GM12878 (cell line): ENCODE measurements at regions of chr2 and their contacts with region 1.

Region 1: DNA sequence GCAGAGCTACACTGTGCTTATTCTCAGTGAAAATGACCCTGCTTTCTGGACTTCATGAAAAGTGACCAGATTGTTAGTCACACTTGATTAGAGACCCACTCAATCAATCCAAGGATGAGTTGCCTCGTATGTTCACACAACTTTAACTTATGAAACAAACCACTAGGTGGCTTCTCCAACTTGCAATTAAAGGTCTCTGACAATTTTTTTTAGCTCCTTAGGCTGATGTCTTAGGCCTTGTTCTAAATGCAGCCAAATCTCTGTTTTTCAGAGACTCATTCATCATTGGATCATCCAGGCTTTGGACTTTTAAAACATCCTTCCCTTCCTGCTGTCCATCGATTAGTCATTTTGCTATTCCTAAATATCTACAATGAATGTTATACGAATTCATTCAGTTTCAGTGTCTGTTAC is 63.4 kb downstream of the MREG start:
- DNase-seq: peak; percentile 30
- ATAC-seq: peak; percentile 97
- H3K4me3 ChIP-seq: no peak overlapping the region
- H3K27ac ChIP-seq: no peak overlapping the region
- H3K4me1 ChIP-seq: no peaks in the 10 kb centered on the region
- H3K27me3 ChIP-seq: no peaks in the 10 kb centered on the region
- CTCF ChIP-seq: peak; percentile 46 to 63 (median 62)
- EP300 ChIP-seq: no peak
- POLR2A ChIP-seq: no peak
- RAD21 ChIP-seq: peak; percentile 89

Region 2: DNA sequence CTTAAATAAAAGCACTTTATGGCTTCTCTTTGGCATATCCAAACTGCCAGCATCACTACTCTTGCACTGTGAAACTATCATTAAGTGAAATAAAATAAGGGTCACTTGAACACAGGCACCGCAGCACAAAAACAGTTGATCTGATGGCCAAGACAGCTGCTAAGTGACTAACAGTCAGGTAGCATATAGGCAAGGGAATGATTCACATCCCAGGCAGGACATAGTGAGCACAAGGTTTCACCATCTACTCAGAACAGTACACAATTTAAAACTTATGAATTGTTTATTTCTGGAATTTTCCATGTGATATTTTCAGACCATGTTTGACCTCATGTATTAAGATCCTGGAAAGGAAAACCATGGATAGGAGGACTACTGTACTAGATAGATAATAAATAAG is 150.8 kb before region 1 on chr2:
- CTCF ChIA-PET with region 1: no interaction called
- POLR2A ChIA-PET with region 1: no interaction called
- RAD21 ChIA-PET with region 1: no interaction called
- SMC1A ChIA-PET with region 1: no interaction called
- in situ Hi-C with region 1: no loop called
- intact Hi-C with region 1: no loop called
- DNase-seq: no peak
- ATAC-seq: no peak
- H3K4me3 ChIP-seq: no peak overlapping the region
- H3K27ac ChIP-seq: no peak overlapping the region
- H3K4me1 ChIP-seq: no peaks in the 10 kb centered on the region
- H3K27me3 ChIP-seq: no peaks in the 10 kb centered on the region
- CTCF ChIP-seq: no peak
- EP300 ChIP-seq: no peak
- POLR2A ChIP-seq: no peak
- RAD21 ChIP-seq: no peak

Region 3: DNA sequence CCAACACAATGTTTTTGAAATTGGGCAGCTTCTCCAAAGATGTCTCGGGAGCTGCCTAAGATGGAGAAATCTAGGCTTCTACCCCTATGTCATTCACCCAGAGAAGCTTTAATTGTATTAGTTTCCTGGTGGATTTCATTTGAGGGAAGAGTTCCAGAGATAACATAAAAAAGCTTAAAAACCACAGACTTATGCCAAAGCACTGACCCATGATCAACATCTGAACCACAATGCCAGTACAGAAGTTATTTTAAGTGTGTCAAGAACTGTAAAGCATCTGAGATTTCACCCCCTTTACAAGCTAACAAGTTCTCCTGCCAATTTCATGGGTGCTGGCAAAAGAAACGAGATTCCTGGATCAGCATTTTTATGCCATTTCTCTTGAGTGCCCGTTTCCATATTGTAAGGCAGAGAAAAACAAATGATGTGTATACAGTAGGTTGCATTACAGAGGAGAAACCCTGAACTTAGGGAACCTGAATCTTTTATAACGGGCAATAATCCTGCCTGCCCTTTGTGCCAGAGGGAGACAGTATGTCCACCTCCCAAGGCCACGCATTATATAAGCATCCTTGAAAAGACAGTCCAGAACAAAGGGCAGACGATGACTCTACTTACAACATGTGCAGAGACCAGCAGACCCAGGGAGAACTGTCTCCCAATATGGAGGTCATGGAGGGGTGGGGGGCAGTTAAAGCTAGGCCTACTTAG is 19.3 kb after region 1 on chr2:
- CTCF ChIA-PET with region 1: interaction called, 37 read pairs
- POLR2A ChIA-PET with region 1: interaction called, 3 read pairs
- RAD21 ChIA-PET with region 1: interaction called, 4 read pairs
- SMC1A ChIA-PET with region 1: interaction called, 11 read pairs
- in situ Hi-C with region 1: no loop called
- intact Hi-C with region 1: no loop called
- DNase-seq: no peak
- ATAC-seq: peak; percentile 27; the same call in 1 of the 3 replicates
- H3K4me3 ChIP-seq: no peak overlapping the region
- H3K27ac ChIP-seq: peak overlapping the region; percentile 20; the same call in 1 of the 2 replicates
- H3K4me1 ChIP-seq: peaks cover 5% of the 10 kb centered on the region; the same call in 1 of the 2 replicates
- H3K27me3 ChIP-seq: no peaks in the 10 kb centered on the region
- CTCF ChIP-seq: no peak
- EP300 ChIP-seq: no peak
- POLR2A ChIP-seq: no peak
- RAD21 ChIP-seq: no peak

Region 4: DNA sequence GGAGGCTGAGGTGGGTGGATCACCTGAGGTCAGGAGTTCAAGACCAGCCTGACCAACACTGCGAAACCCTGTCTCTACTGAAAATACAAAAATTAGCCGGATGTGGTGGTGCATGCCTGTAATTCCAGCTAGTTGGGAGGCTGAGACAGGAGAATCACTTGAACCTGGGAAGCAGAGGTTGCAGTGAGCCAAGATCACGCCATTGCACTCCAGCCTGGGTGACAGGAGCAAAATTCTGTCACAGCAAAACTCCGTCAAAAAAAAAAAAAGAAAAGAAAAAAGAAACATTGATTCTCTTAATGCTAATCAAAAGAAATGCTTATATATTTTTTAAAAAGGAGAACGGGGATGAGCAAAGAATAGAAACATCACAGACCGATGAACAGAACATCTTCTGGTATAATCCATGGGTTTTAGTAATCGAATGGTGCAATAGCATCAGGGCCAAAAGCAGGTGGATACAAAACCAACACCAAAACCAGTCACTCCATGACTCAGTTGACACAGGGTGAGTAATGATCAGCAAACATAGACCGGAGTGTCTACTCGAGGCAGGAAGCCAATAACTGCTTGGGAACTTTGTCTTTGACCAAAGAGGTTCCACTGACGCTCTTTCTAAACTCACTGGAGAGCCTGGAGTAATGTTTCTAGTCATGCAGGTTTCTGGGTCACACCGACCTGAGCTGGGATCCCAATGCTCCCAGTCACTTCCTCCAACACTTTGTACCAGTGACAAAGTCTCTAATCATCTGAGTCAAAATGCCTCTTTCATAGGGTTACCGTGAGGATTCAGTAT is 32.3 kb after region 1 on chr2:
- CTCF ChIA-PET with region 1: interaction called, 15 read pairs
- POLR2A ChIA-PET with region 1: no interaction called
- RAD21 ChIA-PET with region 1: interaction called, 3 read pairs
- SMC1A ChIA-PET with region 1: interaction called, 7 read pairs
- in situ Hi-C with region 1: no loop called
- intact Hi-C with region 1: no loop called
- DNase-seq: peak; percentile 57
- ATAC-seq: no peak
- H3K4me3 ChIP-seq: no peak overlapping the region
- H3K27ac ChIP-seq: peak overlapping the region; percentile 37
- H3K4me1 ChIP-seq: peaks cover 15% of the 10 kb centered on the region
- H3K27me3 ChIP-seq: no peaks in the 10 kb centered on the region
- CTCF ChIP-seq: no peak
- EP300 ChIP-seq: no peak
- POLR2A ChIP-seq: no peak
- RAD21 ChIP-seq: no peak

Region 5: DNA sequence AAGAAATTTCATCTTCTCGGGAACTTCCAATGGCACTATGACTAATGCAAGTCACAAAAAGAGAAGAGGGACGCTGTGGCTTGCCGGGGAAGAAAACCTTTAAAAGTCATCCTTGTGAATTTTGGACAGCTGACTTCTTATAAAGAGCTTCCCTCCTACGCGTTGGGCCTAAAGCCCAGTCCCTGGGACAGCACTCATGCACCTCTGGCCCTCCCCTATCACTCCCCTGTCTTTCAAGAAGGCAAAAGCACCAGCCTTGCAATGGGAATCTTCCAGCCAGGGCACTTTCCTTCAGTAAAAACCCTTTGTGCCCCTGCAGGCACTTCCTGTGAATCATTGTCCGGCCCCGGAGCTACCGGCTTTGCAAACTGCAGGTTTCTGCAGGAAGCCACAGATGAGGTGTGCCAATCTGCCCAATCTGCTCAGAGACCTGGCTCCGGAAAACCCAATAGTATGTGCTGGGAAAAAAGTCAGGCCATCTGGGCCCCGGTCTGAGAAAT is 56.2 kb after region 1 on chr2:
- CTCF ChIA-PET with region 1: interaction called, 138 read pairs
- POLR2A ChIA-PET with region 1: interaction called, 7 read pairs
- RAD21 ChIA-PET with region 1: interaction called, 26 read pairs
- SMC1A ChIA-PET with region 1: interaction called, 80 read pairs
- in situ Hi-C with region 1: no loop called
- intact Hi-C with region 1: loop called (anchors 2 kb)
- DNase-seq: peak; percentile 73
- ATAC-seq: peak; percentile 40
- H3K4me3 ChIP-seq: peak overlapping the region; percentile 61
- H3K27ac ChIP-seq: peak overlapping the region; percentile 90
- H3K4me1 ChIP-seq: peaks cover 55% of the 10 kb centered on the region
- H3K27me3 ChIP-seq: no peaks in the 10 kb centered on the region
- CTCF ChIP-seq: no peak
- EP300 ChIP-seq: peak in 1 of 2 experiments; percentile 60; a peak in 2 of 4 replicates
- POLR2A ChIP-seq: peak; percentile 41; the same call in 1 of the 2 replicates
- RAD21 ChIP-seq: peak; percentile 3; the same call in 1 of the 2 replicates

Region 6: GRCh38 chr2:216013080-216013909 is 63.3 kb after region 1 on chr2 and contains the start of gene MREG:
- CTCF ChIA-PET with region 1: interaction called, 323 read pairs
- POLR2A ChIA-PET with region 1: interaction called, 3 read pairs
- RAD21 ChIA-PET with region 1: interaction called, 172 read pairs
- SMC1A ChIA-PET with region 1: interaction called, 224 read pairs
- in situ Hi-C with region 1: no loop called
- intact Hi-C with region 1: no loop called
- DNase-seq: no peak
- ATAC-seq: peak; percentile 45
- H3K4me3 ChIP-seq: peak within 1 kb of the TSS; percentile 94
- H3K27ac ChIP-seq: peak within 1 kb of the TSS; percentile 93
- H3K4me1 ChIP-seq: peaks cover 31% of the 10 kb centered on the region
- H3K27me3 ChIP-seq: no peaks in the 10 kb centered on the region
- CTCF ChIP-seq: peak; percentile 74 to 88 (median 78)
- EP300 ChIP-seq: no peak
- POLR2A ChIP-seq: peak; percentile 86
- RAD21 ChIP-seq: peak; percentile 54
- polyA plus RNA-seq, gene MREG: 16.8 to 21.3 TPM

Region 7: DNA sequence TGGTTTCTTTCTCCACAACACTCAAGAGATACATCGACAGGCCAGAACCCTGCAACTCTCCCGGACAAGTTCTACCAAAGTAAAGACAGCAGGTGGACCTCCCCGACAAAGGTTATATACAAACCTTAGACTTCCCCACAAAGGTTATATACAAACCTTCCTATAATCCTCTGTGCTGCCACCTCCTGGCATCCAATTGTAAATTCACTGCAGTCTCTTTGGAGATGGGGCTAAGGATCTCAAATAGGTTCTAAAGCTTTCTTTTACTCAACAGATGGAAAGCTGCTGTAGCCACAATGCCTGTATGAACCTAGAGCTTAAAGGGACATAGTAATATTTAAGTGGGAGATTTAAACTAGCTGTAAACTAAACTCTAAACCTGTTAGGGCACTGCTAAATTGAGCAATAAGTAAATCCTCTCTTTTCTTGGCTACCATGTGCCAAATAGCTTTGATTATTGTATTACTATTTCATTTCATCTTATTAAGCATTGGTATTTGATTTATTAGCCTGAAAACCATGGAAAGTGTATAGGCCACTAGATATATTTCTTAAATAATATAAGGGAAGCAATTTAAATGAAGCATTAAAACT is 73.2 kb after region 1 on chr2:
- CTCF ChIA-PET with region 1: interaction called, 323 read pairs
- POLR2A ChIA-PET with region 1: interaction called, 4 read pairs
- RAD21 ChIA-PET with region 1: interaction called, 172 read pairs
- SMC1A ChIA-PET with region 1: interaction called, 224 read pairs
- in situ Hi-C with region 1: loop called (anchors 5 kb)
- intact Hi-C with region 1: loop called (anchors 1 kb)
- DNase-seq: no peak
- ATAC-seq: peak; percentile 97
- H3K4me3 ChIP-seq: no peak overlapping the region
- H3K27ac ChIP-seq: no peak overlapping the region
- H3K4me1 ChIP-seq: no peaks in the 10 kb centered on the region
- H3K27me3 ChIP-seq: no peaks in the 10 kb centered on the region
- CTCF ChIP-seq: peak; percentile 70 to 73 (median 71)
- EP300 ChIP-seq: no peak
- POLR2A ChIP-seq: no peak
- RAD21 ChIP-seq: peak; percentile 89

Region 8: GRCh38 chr2:216666461-216667233 is 716.6 kb after region 1 on chr2:
- CTCF ChIA-PET with region 1: interaction called, 5 read pairs
- POLR2A ChIA-PET with region 1: no interaction called
- RAD21 ChIA-PET with region 1: no interaction called
- SMC1A ChIA-PET with region 1: no interaction called
- in situ Hi-C with region 1: loop called (anchors 10 kb)
- intact Hi-C with region 1: no loop called
- DNase-seq: peak; percentile 19
- ATAC-seq: peak; percentile 92
- H3K4me3 ChIP-seq: no peak overlapping the region
- H3K27ac ChIP-seq: no peak overlapping the region
- H3K4me1 ChIP-seq: no peaks in the 10 kb centered on the region
- H3K27me3 ChIP-seq: peaks cover 2 to 5% of the 10 kb centered on the region in 2 experiments
- CTCF ChIP-seq: peak; percentile 98 to 100 (median 98)
- EP300 ChIP-seq: no peak
- POLR2A ChIP-seq: no peak
- RAD21 ChIP-seq: peak; percentile 97